Lower lobe of right lung (tissue), 2 donors: ENCODE measurements at regions of chr2 and their contacts with region 1.

Region 1: DNA sequence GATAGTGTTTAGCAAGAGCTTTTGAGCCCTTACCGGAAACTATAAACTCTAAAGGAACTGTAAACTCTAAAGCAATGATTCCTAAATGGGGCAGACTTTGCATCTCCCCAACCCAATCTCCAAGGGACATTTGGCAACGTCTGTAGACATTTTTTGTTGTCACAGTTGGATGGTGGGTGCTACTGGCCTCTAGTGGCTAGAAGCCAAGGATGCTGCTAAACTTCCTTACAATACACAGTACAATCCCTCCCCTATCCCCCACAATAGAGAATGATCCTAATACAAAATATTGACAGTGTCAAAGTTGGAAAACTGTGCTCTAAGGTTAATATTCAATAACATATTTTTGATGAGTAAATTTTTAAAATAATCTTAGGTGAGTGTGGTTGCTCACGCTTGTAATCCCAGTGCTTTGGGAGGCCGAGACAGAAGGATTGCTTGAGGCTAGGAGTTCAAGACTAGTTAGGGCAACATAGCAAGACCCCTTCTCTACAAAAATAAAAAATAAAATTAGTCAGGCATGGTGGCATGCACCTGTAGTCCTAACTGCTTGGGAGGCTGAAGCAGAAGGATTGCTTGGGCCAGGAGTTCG is 66.7 kb downstream of the PTPN4 start:
- DNase-seq: no peak
- ATAC-seq: peak in 1 of 2 donors; percentile 66
- H3K4me3 ChIP-seq: no peak overlapping the region
- H3K27ac ChIP-seq: no peak overlapping the region
- H3K4me1 ChIP-seq: peaks cover 1% of the 10 kb centered on the region
- H3K27me3 ChIP-seq: no peaks in the 10 kb centered on the region
- CTCF ChIP-seq: peak; percentile 47

Region 2: DNA sequence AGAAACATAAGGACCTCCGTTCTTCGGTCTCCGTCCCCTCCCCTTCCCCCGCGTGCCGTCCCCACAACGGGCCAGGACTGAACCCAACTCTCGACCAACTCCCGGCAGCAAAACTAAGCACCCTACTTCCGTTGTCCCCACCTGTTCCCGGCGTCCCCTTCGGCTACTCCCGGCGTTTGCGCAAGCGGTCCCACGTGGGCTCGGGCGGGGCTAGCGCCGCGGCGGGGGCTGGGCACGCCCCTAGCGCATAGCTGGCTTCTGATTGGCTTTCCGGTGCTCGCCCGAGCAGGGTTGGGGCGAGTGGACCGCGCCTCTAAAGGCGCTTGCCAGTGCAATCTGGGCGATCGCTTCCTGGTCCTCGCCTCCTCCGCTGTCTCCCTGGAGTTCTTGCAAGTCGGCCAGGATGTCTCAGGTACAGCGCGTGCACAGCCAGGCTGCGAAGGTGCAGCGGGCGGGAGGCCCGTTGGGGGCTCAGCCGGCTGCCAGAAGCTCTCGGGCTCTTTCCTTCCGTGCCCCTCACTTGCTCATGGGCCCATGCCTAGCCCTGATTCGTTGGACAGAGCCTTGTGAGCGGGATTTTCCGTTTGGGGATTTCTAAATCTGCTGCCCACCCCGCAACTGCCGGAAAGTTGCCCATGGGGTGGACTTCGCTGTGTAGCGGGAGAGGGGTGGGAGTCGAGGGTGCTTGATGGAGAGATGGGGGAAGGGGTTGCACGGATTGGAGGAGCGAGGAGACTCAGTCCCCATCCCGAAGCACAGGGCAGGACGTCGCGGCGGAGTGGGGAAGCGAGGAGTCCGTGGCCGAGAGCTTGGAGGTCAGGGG is 459.6 kb before region 1 on chr2 and contains the starts of genes C2orf76 and DBI:
- intact Hi-C with region 1: no loop called
- DNase-seq: peak; percentile 96
- ATAC-seq: peak; percentile 98 to 99
- H3K4me3 ChIP-seq: peak within 1 kb of the TSS; percentile 83
- H3K27ac ChIP-seq: peak within 1 kb of the TSS; percentile 91
- H3K4me1 ChIP-seq: peaks cover 42% of the 10 kb centered on the region
- H3K27me3 ChIP-seq: no peaks in the 10 kb centered on the region
- CTCF ChIP-seq: no peak
- total RNA-seq, gene C2orf76: 11.6 TPM
- total RNA-seq, gene DBI: 172 TPM

Region 3: GRCh38 chr2:119630121-119630520 is 196.3 kb before region 1 on chr2:
- intact Hi-C with region 1: no loop called
- DNase-seq: no peak
- ATAC-seq: no peak
- H3K4me3 ChIP-seq: no peak overlapping the region
- H3K27ac ChIP-seq: no peak overlapping the region
- H3K4me1 ChIP-seq: no peaks in the 10 kb centered on the region
- H3K27me3 ChIP-seq: no peaks in the 10 kb centered on the region
- CTCF ChIP-seq: no peak

Region 4: GRCh38 chr2:119759451-119760236 is 66.8 kb before region 1 on chr2 and contains the start of gene PTPN4:
- intact Hi-C with region 1: loop called (anchors 10 kb)
- DNase-seq: peak; percentile 98
- ATAC-seq: peak; percentile 98 to 99
- H3K4me3 ChIP-seq: peak within 1 kb of the TSS; percentile 84
- H3K27ac ChIP-seq: peak within 1 kb of the TSS; percentile 90
- H3K4me1 ChIP-seq: peaks cover 25% of the 10 kb centered on the region
- H3K27me3 ChIP-seq: no peaks in the 10 kb centered on the region
- CTCF ChIP-seq: no peak
- total RNA-seq, gene PTPN4: 44.5 TPM